GM12878 (cell line): ENCODE measurements at regions of chr13 and their contacts with region 1.

Region 1: DNA sequence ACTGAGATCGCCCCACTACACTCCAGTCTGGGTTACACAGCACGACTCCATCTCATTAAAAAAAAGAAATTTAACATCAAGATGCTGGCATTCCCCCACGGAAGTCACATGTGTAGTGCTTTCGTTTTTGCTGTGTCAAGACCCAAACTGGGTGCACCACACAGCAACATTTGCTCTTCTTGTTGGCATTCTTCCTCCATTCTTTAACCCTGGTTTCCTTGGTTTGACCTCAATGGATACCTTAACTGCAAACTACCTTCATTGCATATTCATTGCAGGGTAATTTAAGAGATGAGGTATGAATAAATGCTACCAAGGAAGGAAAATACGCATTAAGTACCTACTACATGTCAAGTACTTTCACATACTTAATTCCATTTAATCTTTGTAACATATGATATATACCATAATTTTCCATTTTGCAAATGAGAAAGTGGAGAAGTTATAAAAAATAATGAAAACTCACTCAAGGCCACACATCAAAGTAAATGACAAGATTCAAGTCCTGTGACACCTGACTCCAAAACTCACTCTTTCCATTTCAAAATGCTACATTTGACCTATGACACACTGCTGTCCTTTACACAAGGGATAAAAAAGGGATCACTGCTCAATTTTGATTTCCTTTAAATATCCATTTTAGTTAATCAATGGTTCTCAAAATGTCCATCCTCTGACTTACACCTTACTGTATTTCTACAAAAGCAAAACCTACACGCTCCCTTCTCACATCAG is 59.2 kb downstream of the STK24 start:
- DNase-seq: peak; percentile 66
- ATAC-seq: peak; percentile 64
- H3K4me3 ChIP-seq: no peak overlapping the region; the same call in 1 of the 2 replicates
- H3K27ac ChIP-seq: peak overlapping the region; percentile 71
- H3K4me1 ChIP-seq: peaks cover 64% of the 10 kb centered on the region
- H3K27me3 ChIP-seq: no peaks in the 10 kb centered on the region
- CTCF ChIP-seq: no peak
- EP300 ChIP-seq: peak in 1 of 2 experiments; percentile 64; a peak in 1 of 4 replicates
- POLR2A ChIP-seq: no peak
- RAD21 ChIP-seq: no peak

Region 2: GRCh38 chr13:98542568-98543377 is 25.0 kb after region 1 on chr13:
- CTCF ChIA-PET with region 1: interaction called, 4 read pairs
- POLR2A ChIA-PET with region 1: interaction called, 8 read pairs
- RAD21 ChIA-PET with region 1: interaction called, 6 read pairs
- SMC1A ChIA-PET with region 1: interaction called, 5 read pairs
- in situ Hi-C with region 1: no loop called
- intact Hi-C with region 1: loop called (anchors 2 kb)
- DNase-seq: no peak
- ATAC-seq: peak; percentile 58
- H3K4me3 ChIP-seq: peak overlapping the region; percentile 63
- H3K27ac ChIP-seq: peak overlapping the region; percentile 82
- H3K4me1 ChIP-seq: peaks cover 59% of the 10 kb centered on the region
- H3K27me3 ChIP-seq: no peaks in the 10 kb centered on the region
- CTCF ChIP-seq: no peak
- EP300 ChIP-seq: no peak
- POLR2A ChIP-seq: no peak
- RAD21 ChIP-seq: no peak